ENCODE measurements at regions of chr12 and their contacts with region 1.

Region 1: GRCh38 chr12:121443193-121443870 is 43.4 kb downstream of the RNF34 start:
- DNase-seq: peak; percentile 84
- H3K27ac ChIP-seq: no peak overlapping the region
- CTCF ChIP-seq: peak; percentile 88

Region 2: DNA sequence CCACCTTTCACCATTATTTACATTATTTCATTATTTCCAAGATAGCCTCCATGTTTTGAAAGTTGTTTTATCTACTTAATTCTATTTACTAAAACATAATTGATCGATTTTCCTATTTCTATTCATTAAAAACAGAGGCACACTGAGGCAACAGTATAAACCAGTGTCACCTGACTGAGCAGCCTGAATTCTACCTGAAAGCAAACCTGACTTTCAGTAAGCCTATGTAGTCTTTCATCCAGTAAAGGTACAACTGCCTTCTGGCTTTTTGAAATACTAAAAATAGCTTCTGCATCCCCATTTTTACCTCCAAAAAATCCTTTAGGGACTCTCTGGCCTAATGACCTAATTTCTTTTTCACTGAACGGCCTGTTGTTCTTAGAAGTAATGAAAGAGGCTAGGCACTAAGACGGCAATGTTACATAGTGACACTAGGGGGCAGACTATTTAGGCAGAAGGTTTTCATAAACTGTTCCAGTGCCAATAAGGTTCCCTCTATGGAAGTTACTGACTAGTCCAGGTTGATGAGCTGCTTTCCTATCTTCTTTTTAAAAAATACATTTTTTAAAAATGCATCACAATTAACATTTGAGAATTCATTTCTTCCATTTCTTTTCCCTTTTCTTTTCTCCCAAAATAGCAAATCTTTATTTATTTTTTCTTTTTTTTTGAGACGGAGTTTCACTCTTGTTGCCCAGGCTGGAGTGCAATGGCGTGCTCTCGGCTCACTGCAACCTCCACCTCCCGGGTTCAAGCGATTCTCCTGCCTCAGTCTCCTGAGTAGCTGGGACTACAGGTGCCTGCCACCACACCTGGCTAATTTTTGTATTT is 108.6 kb before region 1 on chr12:
- CTCF ChIA-PET with region 1: interaction called, 16 read pairs
- POLR2A ChIA-PET with region 1: no interaction called
- DNase-seq: peak; percentile 62
- H3K27ac ChIP-seq: no peak overlapping the region
- CTCF ChIP-seq: peak; percentile 87

Region 3: DNA sequence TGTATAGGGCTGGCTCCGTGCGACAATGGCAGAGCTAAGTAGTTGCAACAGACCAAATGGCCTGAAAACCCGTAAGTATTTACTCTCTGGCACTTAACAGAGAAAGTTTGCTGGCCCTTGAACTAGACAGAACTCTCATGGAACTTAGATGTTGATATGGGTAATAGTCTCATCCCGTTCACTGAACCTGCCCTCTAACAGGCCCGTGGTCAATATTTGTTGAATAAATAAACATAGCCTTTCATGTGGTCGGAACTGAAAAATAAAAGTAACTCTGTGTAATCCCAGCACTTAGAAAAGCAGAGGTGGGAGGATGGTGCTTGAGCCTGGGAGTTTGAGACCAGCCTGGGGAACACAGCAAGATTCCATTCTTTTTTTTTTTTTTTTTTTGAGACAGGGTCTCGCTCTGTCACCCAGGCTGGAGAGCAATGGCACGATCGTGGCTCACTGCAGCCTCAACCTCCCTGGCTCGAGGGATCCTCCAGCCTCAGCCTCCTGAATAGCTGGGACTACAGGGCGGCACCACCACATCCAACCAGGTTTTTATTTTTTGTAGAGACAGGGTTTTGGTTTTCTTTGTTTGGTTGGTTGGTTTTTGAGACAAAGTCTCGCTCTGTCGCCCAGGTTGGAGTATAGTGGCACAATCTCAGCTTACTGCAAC is 107.8 kb after region 1 on chr12:
- CTCF ChIA-PET with region 1: no interaction called
- POLR2A ChIA-PET with region 1: no interaction called
- DNase-seq: no peak
- H3K27ac ChIP-seq: no peak overlapping the region
- CTCF ChIP-seq: no peak